ENCODE measurements at regions of chr5 and their contacts with region 1.

Region 1: DNA sequence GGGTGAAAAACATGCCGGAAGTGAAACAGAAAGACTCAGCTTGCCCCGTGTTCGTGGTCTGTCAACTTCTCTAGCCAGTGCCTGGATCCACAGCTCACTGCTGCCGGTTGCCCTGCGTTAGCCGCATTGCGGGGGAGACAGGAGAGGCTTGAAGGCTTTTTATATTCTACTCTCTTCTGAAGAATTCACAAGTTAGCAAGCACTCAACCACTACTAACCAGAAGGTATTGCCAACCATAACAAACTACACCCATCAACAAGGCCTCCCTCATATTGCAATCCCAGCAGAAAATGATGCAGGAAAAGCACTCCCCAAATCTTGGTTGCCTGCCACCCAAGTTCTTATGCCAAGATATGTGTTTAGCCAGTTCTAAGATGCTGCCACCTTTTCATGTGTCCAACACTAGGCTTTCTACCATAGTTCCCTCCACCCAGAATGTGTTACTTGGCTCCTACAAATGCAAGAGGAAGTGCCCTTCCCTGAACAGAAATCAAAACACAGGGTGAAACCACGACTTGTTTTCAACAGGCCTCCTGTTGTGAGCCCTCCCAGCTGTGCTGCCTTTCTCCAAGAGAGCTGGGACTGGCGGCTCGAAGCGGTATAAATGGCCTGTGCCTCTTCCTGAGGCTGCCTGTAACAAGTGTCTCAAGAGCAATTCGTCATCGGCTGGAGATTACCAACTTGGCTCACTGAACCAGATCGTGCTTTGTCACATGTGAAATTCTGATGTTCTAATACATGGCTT is 129.0 kb downstream of the SNX18 start:
- DNase-seq: peak; percentile 80
- H3K4me3 Mint-ChIP-seq: peak overlapping the region; percentile 68
- H3K27ac Mint-ChIP-seq: peak overlapping the region; percentile 88
- H3K4me1 Mint-ChIP-seq: peaks cover 46% of the 10 kb centered on the region
- H3K27me3 Mint-ChIP-seq: no peaks in the 10 kb centered on the region

Region 2: GRCh38 chr5:54249210-54250028 is 397.1 kb before region 1 on chr5:
- intact Hi-C with region 1: no loop called
- DNase-seq: no peak
- H3K4me3 Mint-ChIP-seq: no peak overlapping the region
- H3K27ac Mint-ChIP-seq: no peak overlapping the region
- H3K4me1 Mint-ChIP-seq: no peaks in the 10 kb centered on the region
- H3K27me3 Mint-ChIP-seq: peaks cover 4% of the 10 kb centered on the region

Region 3: GRCh38 chr5:54673523-54674225 is 27.1 kb after region 1 on chr5:
- intact Hi-C with region 1: loop called (anchors 1 kb)
- DNase-seq: peak; percentile 41
- H3K4me3 Mint-ChIP-seq: peak overlapping the region; percentile 54
- H3K27ac Mint-ChIP-seq: peak overlapping the region; percentile 77
- H3K4me1 Mint-ChIP-seq: peaks cover 78% of the 10 kb centered on the region
- H3K27me3 Mint-ChIP-seq: no peaks in the 10 kb centered on the region

Region 4: DNA sequence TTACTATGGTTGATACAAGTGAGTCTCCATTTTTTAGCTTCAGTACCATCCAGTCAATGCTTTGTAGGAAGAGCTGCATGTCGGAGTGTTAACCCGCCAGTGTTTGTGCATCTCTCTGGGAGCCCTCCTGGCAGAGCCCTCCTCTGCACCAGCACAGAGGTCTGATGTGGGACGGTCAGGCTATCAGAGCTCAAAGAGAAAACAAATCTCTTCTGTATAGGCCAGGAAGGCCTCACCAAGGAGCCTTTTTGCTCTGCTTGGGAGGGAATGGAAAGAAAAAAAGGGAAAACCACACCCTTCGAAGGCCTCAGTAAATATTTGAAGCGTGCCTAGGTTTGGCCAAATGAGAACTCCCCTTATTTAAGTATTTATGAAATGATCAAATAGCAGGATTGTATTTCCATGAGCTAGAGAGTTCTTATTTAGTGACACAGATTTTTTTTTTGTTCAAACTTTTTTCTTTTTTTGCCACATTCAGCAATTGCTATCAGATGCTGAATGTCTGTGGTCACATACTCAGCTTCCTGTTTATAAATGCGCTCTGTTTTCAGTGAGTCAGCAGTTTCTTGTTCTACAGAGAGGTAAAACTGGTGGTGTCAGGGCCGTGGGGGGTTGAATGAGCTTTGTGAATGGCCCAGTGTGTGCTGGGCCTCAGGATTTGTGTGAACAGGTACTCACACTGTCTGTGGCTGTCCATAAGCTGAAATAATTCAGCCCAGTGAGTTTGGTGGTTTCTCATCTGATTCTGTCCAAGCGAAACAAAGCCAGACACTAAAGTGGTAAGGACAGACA is 97.7 kb after region 1 on chr5:
- intact Hi-C with region 1: loop called (anchors 2 kb)
- DNase-seq: peak; percentile 63
- H3K4me3 Mint-ChIP-seq: peak overlapping the region; percentile 50
- H3K27ac Mint-ChIP-seq: peak overlapping the region; percentile 87
- H3K4me1 Mint-ChIP-seq: peaks cover 20% of the 10 kb centered on the region
- H3K27me3 Mint-ChIP-seq: no peaks in the 10 kb centered on the region

Region 5: GRCh38 chr5:54844905-54845566 is 198.5 kb after region 1 on chr5:
- intact Hi-C with region 1: loop called (anchors 1 kb)
- DNase-seq: no peak
- H3K4me3 Mint-ChIP-seq: no peak overlapping the region
- H3K27ac Mint-ChIP-seq: peak overlapping the region; percentile 59
- H3K4me1 Mint-ChIP-seq: peaks cover 32% of the 10 kb centered on the region
- H3K27me3 Mint-ChIP-seq: peaks cover 14% of the 10 kb centered on the region

Region 6: DNA sequence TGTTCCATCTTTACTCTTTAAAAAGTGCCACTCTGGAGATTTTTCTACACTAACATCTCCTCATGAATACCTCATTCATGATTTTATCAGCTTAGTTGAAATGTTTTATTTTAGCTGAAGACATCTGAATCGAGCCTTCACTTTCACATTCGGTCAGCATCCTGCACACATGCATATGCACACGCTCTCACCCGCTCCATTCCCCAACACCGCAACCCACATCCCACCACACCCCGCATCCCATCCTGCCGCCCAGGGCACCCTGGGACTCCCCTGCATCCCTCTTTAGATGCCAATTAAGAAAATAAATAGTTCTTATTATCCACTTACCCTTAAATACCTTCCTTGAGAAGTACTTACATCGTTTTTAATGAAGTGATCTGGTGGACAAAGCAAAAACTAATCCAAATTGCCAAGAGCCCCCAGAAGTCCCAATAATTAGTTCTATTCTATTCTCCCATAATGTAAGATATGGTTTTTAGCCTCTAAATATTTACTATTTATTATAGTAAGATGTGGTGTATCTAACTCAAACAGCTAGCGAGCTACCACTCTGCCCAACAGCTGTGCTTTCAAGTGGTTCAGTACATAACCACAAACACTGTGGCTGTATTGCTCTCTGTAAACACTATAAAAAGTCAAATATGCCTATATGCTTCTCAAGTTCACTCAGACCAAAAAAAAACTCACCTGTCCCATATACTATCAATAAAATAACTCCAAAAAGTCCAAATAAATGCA is 415.7 kb after region 1 on chr5:
- intact Hi-C with region 1: loop called (anchors 10 kb)
- DNase-seq: peak; percentile 79
- H3K4me3 Mint-ChIP-seq: peak overlapping the region; percentile 79
- H3K27ac Mint-ChIP-seq: peak overlapping the region; percentile 98
- H3K4me1 Mint-ChIP-seq: peaks cover 83% of the 10 kb centered on the region
- H3K27me3 Mint-ChIP-seq: peaks cover 1% of the 10 kb centered on the region

Region 7: DNA sequence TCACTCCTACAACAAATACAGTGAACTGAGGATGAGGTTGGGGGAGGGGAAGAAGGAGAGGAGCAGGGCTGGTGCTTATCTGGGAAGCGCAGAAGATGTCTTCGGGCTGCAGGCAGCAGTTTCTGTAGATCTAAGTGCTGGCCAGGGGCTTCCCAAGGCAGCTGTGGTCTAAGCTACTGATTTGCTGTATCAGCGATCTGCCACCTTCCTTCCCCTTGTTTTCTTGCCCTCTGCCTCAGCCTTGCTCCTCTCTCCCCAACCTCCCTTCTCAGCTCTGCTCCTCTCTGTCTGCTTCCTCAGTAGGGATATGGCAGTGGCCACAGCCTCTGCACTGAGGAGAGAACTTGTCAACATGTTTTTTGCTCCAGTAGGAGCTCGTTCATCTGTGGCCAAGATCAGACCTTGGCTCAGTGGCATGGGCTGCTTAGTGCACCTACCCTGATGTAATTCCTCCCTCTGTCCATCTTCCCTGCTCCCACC is 1391.0 kb after region 1 on chr5:
- intact Hi-C with region 1: no loop called
- DNase-seq: no peak
- H3K4me3 Mint-ChIP-seq: no peak overlapping the region
- H3K27ac Mint-ChIP-seq: no peak overlapping the region
- H3K4me1 Mint-ChIP-seq: peaks cover 8% of the 10 kb centered on the region
- H3K27me3 Mint-ChIP-seq: peaks cover 19% of the 10 kb centered on the region